ENCODE measurements at regions of chr1 and their contacts with region 1.

Region 1: GRCh38 chr1:169906938-169907337 is 13.2 kb upstream of the SCYL3 start:
- DNase-seq: peak; percentile 23
- ATAC-seq: no peak
- H3K4me3 ChIP-seq: no peak overlapping the region
- H3K27ac ChIP-seq: no peak overlapping the region
- H3K4me1 ChIP-seq: no peaks in the 10 kb centered on the region
- H3K27me3 ChIP-seq: no peaks in the 10 kb centered on the region
- CTCF ChIP-seq: no peak

Region 2: GRCh38 chr1:170332801-170333200 is 425.9 kb after region 1 on chr1:
- CTCF ChIA-PET with region 1: interaction called, 13 read pairs
- POLR2A ChIA-PET with region 1: no interaction called
- intact Hi-C with region 1: no loop called
- DNase-seq: no peak
- ATAC-seq: no peak
- H3K4me3 ChIP-seq: no peak overlapping the region
- H3K27ac ChIP-seq: no peak overlapping the region
- H3K4me1 ChIP-seq: no peaks in the 10 kb centered on the region
- H3K27me3 ChIP-seq: peaks cover 44% of the 10 kb centered on the region
- CTCF ChIP-seq: no peak

Measured in PC-3 (cell line).